ENCODE measurements at regions of chr6 and their contacts with region 1.

Region 1: GRCh38 chr6:35342258-35343091 is at the start of gene PPARD:
- DNase-seq: peak; percentile 98
- ATAC-seq: peak; percentile 100
- total RNA-seq, gene PPARD: 14.1 to 21.3 TPM

Region 2: GRCh38 chr6:35139908-35140655 is 202.4 kb before region 1 on chr6:
- intact Hi-C with region 1: no loop called
- DNase-seq: peak; percentile 49
- ATAC-seq: peak; percentile 50 to 64

Region 3: GRCh38 chr6:35415065-35415991 is 72.9 kb after region 1 on chr6:
- intact Hi-C with region 1: loop called in 1 of 2 experiments (anchors 2 kb)
- DNase-seq: peak; percentile 69
- ATAC-seq: peak; percentile 81 to 91

Region 4: GRCh38 chr6:35449287-35449881 is 106.9 kb after region 1 on chr6:
- intact Hi-C with region 1: loop called (anchors 1 to 5 kb)
- DNase-seq: no peak
- ATAC-seq: peak; percentile 53 to 62

Region 5: DNA sequence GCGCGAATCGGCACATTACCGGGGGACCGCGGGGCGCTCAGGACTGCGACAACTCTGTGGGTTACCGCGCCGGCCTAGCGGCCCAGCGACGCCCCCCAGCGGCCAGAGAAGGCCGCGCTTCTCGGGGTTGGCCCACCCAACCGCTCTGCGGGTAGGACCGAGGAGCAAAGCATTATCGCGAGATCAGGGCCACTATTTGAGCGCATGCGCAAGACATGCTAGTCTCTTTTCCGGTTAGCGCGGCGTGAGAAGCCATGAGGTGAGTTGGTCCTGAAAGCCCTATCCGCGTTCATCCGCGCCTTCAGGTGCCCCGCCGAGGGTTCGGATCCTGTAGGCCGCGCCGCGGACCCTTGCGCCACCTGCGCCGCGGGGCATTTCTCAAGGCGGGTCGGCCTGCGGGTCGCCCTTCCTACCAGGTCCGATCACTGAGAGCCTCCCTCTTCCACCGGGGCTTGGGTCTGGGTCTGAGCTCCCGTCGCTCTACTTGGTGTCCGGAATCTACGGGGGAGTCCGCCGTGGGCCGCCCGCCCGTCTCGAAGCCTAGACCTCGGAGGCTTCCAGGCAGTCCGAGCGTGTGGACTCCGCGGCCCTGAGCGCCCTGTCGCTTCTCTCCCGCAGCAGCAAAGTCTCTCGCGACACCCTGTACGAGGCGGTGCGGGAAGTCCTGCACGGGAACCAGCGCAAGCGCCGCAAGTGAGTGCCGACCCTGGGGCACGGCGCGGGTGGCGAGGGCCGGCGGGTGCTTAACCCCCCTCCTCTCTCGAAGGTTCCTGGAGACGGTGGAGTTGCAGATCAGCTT is 125.9 kb after region 1 on chr6 and contains the start of gene RPL10A:
- intact Hi-C with region 1: no loop called
- DNase-seq: peak; percentile 95
- ATAC-seq: peak; percentile 86 to 92
- total RNA-seq, gene RPL10A: 691 to 715 TPM